WTC11 (cell line): ENCODE measurements at regions of chr11 and their contacts with region 1.

Region 1: GRCh38 chr11:123745764-123746451 is 4.4 kb upstream of the ZNF202 start:
- DNase-seq: no peak
- ATAC-seq: peak; percentile 27
- H3K4me3 Mint-ChIP-seq: peak overlapping the region; percentile 38
- H3K27ac Mint-ChIP-seq: peak overlapping the region; percentile 94
- H3K4me1 Mint-ChIP-seq: peaks cover 52% of the 10 kb centered on the region
- H3K27me3 Mint-ChIP-seq: no peaks in the 10 kb centered on the region
- CTCF ChIP-seq: no peak

Region 2: GRCh38 chr11:123775289-123775688 is 29.4 kb after region 1 on chr11:
- CTCF ChIA-PET with region 1: interaction called, 11 read pairs
- POLR2A ChIA-PET with region 1: interaction called, 5 read pairs
- DNase-seq: peak; percentile 21
- ATAC-seq: peak; percentile 93
- H3K4me3 Mint-ChIP-seq: no peak overlapping the region
- H3K27ac Mint-ChIP-seq: peak overlapping the region; percentile 100
- H3K4me1 Mint-ChIP-seq: peaks cover 61% of the 10 kb centered on the region
- H3K27me3 Mint-ChIP-seq: no peaks in the 10 kb centered on the region
- CTCF ChIP-seq: no peak

Region 3: DNA sequence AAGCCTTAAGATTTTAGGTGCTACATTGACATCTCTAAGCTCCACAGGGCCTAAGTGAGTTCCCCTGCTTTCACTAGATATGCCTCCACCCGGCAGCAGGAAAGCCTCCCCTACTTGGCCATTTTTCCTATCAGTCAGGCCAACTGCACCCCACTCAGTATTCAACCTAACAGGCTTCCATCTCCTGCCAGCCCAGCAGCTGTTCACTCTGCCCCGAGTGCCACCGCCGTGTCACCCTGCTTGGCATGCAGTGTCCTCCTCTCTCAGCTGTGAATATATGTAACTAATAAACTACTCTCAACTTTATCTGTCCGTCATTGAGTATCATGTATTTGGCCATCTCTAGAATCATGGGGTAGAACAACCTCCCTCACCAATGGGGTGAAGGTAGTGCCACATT is 69.2 kb after region 1 on chr11:
- CTCF ChIA-PET with region 1: no interaction called
- POLR2A ChIA-PET with region 1: no interaction called
- DNase-seq: no peak
- ATAC-seq: no peak
- H3K4me3 Mint-ChIP-seq: no peak overlapping the region
- H3K27ac Mint-ChIP-seq: no peak overlapping the region
- H3K4me1 Mint-ChIP-seq: no peaks in the 10 kb centered on the region
- H3K27me3 Mint-ChIP-seq: no peaks in the 10 kb centered on the region
- CTCF ChIP-seq: no peak